Right ventricle myocardium inferior (tissue), 1 donor: ENCODE measurements at regions of chr11 and their contacts with region 1.

Region 1: GRCh38 chr11:62905927-62906531 is 15.1 kb downstream of the CHRM1 start:
- DNase-seq: peak; percentile 83
- ATAC-seq: peak; percentile 75

Region 2: DNA sequence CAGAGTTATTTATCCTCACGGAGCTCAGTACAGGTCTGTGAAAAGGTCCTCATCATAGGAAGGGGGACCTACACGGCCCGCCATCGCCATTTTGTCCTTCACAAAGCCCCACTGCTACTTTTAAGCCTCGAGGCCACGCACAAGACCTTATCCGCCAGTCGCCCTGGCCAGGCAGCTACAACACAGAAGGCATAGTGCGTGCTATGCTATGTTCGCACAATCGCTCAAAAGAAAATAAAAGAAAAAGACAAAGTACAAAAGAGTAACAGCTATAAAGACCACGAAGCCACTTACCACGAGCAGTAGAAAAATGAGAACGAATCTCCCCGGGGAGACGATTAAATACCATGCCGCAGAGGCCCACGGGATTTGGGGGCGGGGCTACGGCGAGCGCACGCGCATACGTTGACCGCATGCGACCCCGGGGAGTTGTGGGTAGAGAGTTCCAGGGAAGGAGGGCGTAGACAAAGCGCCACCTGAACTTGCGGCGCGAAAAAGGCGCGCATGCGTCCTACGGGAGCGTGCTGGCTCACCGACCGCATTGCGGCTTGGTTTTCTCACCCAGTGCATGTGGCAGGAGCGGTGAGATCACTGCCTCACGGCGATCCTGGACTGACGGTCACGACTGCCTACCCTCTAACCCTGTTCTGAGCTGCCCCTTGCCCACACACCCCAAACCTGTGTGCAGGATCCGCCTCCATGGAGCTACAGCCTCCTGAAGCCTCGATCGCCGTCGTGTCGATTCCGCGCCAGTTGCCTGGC is 50.3 kb before region 1 on chr11:
- intact Hi-C with region 1: no loop called
- DNase-seq: peak; percentile 96
- ATAC-seq: peak; percentile 99

Region 3: GRCh38 chr11:62925745-62926679 is 20.0 kb after region 1 on chr11:
- intact Hi-C with region 1: loop called (anchors 2 kb)
- DNase-seq: no peak
- ATAC-seq: no peak

Region 4: GRCh38 chr11:62974848-62975522 is 69.0 kb after region 1 on chr11:
- intact Hi-C with region 1: loop called (anchors 2 kb)
- DNase-seq: peak; percentile 83
- ATAC-seq: peak; percentile 70

Region 5: DNA sequence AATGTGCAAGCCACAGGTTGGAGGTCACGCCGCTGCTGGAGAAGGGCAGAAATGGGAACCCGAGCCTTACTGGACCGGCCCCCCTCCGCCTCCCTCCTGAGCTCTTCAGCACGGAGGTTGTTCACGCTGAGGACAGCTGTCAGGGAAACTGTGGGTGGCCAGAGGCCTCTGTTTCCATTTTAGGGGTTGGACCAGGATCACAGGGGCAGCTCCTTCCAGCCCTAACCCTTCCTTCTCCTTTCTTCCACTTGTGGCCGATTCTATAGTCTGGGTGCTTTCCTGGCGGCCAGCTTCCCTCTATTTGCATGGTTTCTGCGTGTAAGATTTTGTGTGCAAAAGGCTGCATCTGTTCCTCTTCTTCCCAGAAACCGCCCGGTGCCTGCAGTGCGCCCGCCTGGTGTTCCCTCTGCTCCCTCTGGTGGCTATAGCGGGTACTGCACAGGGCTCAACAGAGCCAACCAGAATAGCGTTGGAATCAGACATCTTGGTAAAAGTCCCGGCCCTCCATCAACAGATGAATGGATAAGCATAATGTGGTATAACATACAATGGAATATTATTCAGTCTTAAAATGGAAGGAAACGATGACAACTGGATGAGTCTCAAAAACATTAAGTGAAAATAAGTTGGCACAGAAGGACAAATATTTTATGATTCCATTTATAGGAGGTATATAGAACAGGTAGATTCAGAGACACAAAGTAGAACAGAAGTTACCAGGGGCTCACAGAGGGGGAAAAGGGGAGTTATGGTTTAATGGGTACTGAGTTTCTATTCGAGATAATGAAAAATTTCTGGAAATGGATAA is 118.0 kb after region 1 on chr11:
- intact Hi-C with region 1: loop called (anchors 1 kb)
- DNase-seq: peak; percentile 92
- ATAC-seq: peak; percentile 89